Activated naive CD8-positive, alpha-beta T cell treated with anti-CD3 and anti-CD28 coated beads, Interleukin-2, amount 10 ng/mL, durations not matched to agents 7 days and 5 days (primary cell): ENCODE measurements at regions of chr19 and their contacts with region 1.

Region 1: GRCh38 chr19:45902651-45903625 is 525 bp upstream of the MYPOP start:
- DNase-seq: peak; percentile 100
- ATAC-seq: peak; percentile 92
- H3K4me3 Mint-ChIP-seq: peak overlapping the region; percentile 97
- H3K27ac Mint-ChIP-seq: peak overlapping the region; percentile 90
- H3K4me1 Mint-ChIP-seq: peaks cover 20% of the 10 kb centered on the region
- H3K27me3 Mint-ChIP-seq: no peaks in the 10 kb centered on the region

Region 2: DNA sequence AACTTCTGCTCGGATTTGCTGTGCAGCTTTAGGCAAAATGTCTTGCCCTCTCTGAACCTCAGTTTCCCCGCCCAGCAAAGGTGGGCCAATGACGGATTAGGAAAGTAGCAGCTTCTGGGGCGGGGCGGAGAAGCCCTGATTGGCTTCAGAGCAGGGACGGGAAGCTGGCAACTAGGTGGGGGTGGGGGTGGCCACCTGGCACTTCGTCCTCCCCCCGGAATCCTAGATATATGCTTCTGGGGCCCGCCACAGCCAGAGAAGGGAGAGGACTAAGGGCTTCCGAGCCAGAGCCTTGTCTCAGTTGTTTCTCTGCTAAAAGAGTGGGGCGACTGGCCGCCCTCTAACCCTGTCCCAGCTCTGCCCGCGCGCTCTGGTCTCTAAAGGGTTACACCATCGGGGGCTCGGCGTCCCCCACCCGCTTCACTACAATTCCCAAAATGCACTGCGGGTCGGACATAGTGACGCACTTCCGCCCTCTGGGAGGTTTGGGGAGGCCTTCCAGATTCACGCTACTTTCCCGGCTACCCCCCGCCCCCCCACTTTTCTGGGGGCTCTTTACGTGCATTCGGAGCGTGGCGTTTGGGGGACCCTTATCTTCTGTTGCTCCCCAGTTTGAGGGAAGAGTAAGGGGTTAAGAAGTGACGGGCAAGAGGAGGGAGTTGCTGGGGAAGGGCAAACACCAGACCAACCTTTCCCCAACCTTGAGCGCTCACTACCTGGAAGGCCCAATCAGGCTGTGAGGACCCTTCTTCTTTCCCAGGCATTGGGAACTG is 16.3 kb before region 1 on chr19:
- POLR2A ChIA-PET with region 1: interaction called, 45 read pairs
- DNase-seq: peak; percentile 88
- ATAC-seq: peak; percentile 83
- H3K4me3 Mint-ChIP-seq: peak overlapping the region; percentile 90
- H3K27ac Mint-ChIP-seq: peak overlapping the region; percentile 94
- H3K4me1 Mint-ChIP-seq: peaks cover 17% of the 10 kb centered on the region
- H3K27me3 Mint-ChIP-seq: no peaks in the 10 kb centered on the region

Region 3: DNA sequence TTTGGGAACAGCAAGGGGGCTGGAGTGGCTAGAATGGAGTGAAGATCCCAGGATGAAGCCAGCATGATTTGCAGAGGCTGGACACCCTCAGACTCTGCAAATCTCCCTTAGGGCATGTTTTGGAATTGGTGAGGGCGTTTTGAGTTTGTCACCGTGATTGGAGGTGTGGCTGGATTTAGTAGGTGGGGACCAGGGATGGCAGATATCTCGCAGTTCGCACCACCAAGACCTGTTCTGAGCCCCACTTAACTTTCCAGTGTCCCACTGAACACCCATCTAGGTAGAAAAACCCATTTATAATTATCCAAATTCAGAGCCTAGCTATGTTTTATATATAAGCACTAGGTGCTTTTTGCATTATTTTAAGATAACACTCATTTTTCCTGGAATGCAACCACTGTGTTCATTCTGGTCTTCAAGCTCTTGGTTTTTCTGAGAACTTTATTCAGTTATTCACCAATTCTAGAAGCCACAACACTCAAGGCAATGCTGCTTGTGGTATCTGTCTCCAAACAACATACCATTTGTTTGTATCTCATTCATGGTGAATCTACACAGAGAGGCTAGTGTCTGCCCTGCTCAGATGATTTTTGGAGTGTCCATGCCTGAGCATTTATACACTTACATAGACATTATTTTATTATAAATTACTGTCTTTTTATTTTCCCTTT is 14.6 kb after region 1 on chr19:
- POLR2A ChIA-PET with region 1: interaction called, 19 read pairs
- DNase-seq: peak; percentile 42
- ATAC-seq: peak; percentile 76
- H3K4me3 Mint-ChIP-seq: peak overlapping the region; percentile 63
- H3K27ac Mint-ChIP-seq: peak overlapping the region; percentile 62
- H3K4me1 Mint-ChIP-seq: peaks cover 36% of the 10 kb centered on the region
- H3K27me3 Mint-ChIP-seq: peaks cover 27% of the 10 kb centered on the region

Region 4: DNA sequence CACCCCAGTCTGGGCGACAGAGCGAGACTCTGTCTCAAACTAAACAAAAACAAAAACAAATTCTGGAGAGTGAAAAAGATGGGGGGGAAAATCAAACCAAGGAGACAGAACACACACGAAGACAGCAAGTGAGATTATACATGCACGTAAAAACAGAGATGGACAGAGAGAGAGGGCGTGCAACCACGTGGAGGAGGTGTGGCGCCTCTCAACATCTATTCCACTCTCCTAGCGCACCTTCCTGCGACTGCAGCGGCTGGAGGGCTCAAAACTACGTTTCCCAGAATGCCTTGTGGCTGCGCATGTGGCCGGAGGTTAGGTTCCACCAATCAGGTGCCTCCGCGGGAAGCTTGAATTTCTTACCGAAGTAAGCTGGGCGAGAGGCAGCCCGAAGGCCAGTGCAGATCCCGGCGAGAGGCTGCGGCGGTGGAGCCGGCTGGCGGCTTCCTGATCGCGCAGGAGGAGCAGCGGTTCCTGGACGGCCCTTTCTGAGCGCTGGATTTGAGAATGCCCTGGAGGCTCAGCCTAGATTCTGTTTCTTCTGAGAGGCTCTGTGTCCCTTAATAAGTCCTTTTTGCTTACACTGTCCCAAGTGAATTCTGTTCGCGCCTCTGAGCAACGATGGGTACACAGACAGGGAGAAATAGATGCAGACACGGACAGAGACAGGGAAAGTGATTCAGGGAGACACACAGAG is 24.8 kb after region 1 on chr19:
- POLR2A ChIA-PET with region 1: interaction called, 14 read pairs
- DNase-seq: peak; percentile 85
- ATAC-seq: peak; percentile 97
- H3K4me3 Mint-ChIP-seq: peak overlapping the region; percentile 82
- H3K27ac Mint-ChIP-seq: peak overlapping the region; percentile 82
- H3K4me1 Mint-ChIP-seq: peaks cover 7% of the 10 kb centered on the region
- H3K27me3 Mint-ChIP-seq: peaks cover 32% of the 10 kb centered on the region

Region 5: GRCh38 chr19:45994989-45995714 is 92.2 kb after region 1 on chr19 and contains the start of gene CCDC61:
- POLR2A ChIA-PET with region 1: interaction called, 11 read pairs
- DNase-seq: peak; percentile 91
- ATAC-seq: peak; percentile 98
- H3K4me3 Mint-ChIP-seq: peak within 1 kb of the TSS; percentile 41
- H3K27ac Mint-ChIP-seq: no peak within 1 kb of the TSS
- H3K4me1 Mint-ChIP-seq: peaks cover 24% of the 10 kb centered on the region
- H3K27me3 Mint-ChIP-seq: peaks cover 2% of the 10 kb centered on the region
- total RNA-seq, gene CCDC61: 31.5 to 34.2 TPM